ENCODE measurements at regions of chr1 and their contacts with region 1.

Region 1: GRCh38 chr1:74771913-74772515 is 39.1 kb downstream of the TYW3 start:
- DNase-seq: peak in 3 of 9 experiments; percentile 5 to 47 (median 39)
- ATAC-seq: peak; percentile 51
- H3K4me3 ChIP-seq: no peak overlapping the region
- H3K4me3 Mint-ChIP-seq: no peak overlapping the region
- H3K27ac ChIP-seq: no peak overlapping the region
- H3K27ac Mint-ChIP-seq: no peak overlapping the region
- H3K4me1 ChIP-seq: no peaks in the 10 kb centered on the region
- H3K4me1 Mint-ChIP-seq: peaks cover 3% of the 10 kb centered on the region
- H3K27me3 ChIP-seq: no peaks in the 10 kb centered on the region
- H3K27me3 Mint-ChIP-seq: peaks cover 8% of the 10 kb centered on the region
- CTCF ChIP-seq: peak; percentile 81

Region 2: DNA sequence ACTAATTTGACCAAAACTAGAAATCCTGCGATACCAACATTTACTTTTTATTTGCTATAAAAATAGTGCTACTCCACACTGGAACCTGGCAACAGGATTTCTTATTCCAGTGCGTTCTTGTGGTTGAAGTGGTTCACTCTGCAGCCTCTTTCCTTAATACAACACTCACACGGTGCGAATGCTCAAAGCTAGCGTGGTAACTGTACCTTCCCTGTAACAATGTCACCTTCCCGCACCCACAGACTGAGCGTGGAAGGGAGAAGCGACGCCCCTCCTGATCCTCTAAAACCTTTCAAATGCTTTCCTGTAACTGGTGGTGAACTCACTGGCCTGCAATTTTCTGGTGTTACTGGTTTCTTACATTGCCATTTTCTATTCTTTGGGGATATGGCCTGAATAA is 391.8 kb before region 1 on chr1:
- CTCF ChIA-PET with region 1: no interaction called
- POLR2A ChIA-PET with region 1: no interaction called
- intact Hi-C with region 1: no loop called
- DNase-seq: no peak
- ATAC-seq: no peak
- H3K4me3 ChIP-seq: no peak overlapping the region
- H3K4me3 Mint-ChIP-seq: no peak overlapping the region
- H3K27ac ChIP-seq: no peak overlapping the region
- H3K27ac Mint-ChIP-seq: no peak overlapping the region
- H3K4me1 ChIP-seq: no peaks in the 10 kb centered on the region
- H3K4me1 Mint-ChIP-seq: no peaks in the 10 kb centered on the region
- H3K27me3 ChIP-seq: no peaks in the 10 kb centered on the region
- H3K27me3 Mint-ChIP-seq: no peaks in the 10 kb centered on the region
- CTCF ChIP-seq: no peak

Region 3: DNA sequence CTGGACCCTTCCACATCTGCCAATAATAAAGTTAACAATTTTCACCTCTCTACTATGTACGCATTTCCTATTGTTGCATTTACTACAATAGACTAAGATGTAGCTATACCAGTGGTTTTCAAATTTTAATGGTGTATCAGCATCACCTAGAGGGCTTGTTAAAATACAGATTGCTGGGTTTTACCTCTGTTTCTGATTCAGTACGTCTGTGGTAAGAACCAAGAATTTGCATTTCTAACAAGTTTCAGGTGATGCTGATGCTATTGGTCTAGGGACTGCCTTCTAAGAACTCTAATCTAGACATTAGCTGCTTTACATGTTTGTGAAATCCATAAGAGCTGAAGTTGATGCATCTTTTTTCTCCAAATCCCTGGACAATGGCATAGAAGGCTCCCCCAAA is 158.1 kb before region 1 on chr1:
- CTCF ChIA-PET with region 1: no interaction called
- POLR2A ChIA-PET with region 1: no interaction called
- intact Hi-C with region 1: no loop called
- DNase-seq: no peak
- ATAC-seq: no peak
- H3K4me3 ChIP-seq: no peak overlapping the region
- H3K4me3 Mint-ChIP-seq: no peak overlapping the region
- H3K27ac ChIP-seq: no peak overlapping the region
- H3K27ac Mint-ChIP-seq: no peak overlapping the region
- H3K4me1 ChIP-seq: no peaks in the 10 kb centered on the region
- H3K4me1 Mint-ChIP-seq: no peaks in the 10 kb centered on the region
- H3K27me3 ChIP-seq: no peaks in the 10 kb centered on the region
- H3K27me3 Mint-ChIP-seq: no peaks in the 10 kb centered on the region
- CTCF ChIP-seq: no peak

Region 4: GRCh38 chr1:75203415-75204277 is 431.6 kb after region 1 on chr1:
- CTCF ChIA-PET with region 1: no interaction called
- POLR2A ChIA-PET with region 1: no interaction called
- intact Hi-C with region 1: loop called (anchors 10 kb)
- DNase-seq: peak in 1 of 9 experiments; percentile 1
- ATAC-seq: no peak
- H3K4me3 ChIP-seq: no peak overlapping the region
- H3K4me3 Mint-ChIP-seq: no peak overlapping the region
- H3K27ac ChIP-seq: no peak overlapping the region
- H3K27ac Mint-ChIP-seq: no peak overlapping the region
- H3K4me1 ChIP-seq: no peaks in the 10 kb centered on the region
- H3K4me1 Mint-ChIP-seq: no peaks in the 10 kb centered on the region
- H3K27me3 ChIP-seq: no peaks in the 10 kb centered on the region
- H3K27me3 Mint-ChIP-seq: no peaks in the 10 kb centered on the region
- CTCF ChIP-seq: no peak

Region 5: GRCh38 chr1:75625795-75626194 is 853.8 kb after region 1 on chr1:
- CTCF ChIA-PET with region 1: no interaction called
- POLR2A ChIA-PET with region 1: no interaction called
- intact Hi-C with region 1: loop called (anchors 5 kb)
- DNase-seq: no peak
- ATAC-seq: no peak
- H3K4me3 ChIP-seq: no peak overlapping the region
- H3K4me3 Mint-ChIP-seq: no peak overlapping the region
- H3K27ac ChIP-seq: no peak overlapping the region
- H3K27ac Mint-ChIP-seq: no peak overlapping the region
- H3K4me1 ChIP-seq: no peaks in the 10 kb centered on the region
- H3K4me1 Mint-ChIP-seq: no peaks in the 10 kb centered on the region
- H3K27me3 ChIP-seq: no peaks in the 10 kb centered on the region
- H3K27me3 Mint-ChIP-seq: peaks cover 26% of the 10 kb centered on the region
- CTCF ChIP-seq: no peak

Region 6: DNA sequence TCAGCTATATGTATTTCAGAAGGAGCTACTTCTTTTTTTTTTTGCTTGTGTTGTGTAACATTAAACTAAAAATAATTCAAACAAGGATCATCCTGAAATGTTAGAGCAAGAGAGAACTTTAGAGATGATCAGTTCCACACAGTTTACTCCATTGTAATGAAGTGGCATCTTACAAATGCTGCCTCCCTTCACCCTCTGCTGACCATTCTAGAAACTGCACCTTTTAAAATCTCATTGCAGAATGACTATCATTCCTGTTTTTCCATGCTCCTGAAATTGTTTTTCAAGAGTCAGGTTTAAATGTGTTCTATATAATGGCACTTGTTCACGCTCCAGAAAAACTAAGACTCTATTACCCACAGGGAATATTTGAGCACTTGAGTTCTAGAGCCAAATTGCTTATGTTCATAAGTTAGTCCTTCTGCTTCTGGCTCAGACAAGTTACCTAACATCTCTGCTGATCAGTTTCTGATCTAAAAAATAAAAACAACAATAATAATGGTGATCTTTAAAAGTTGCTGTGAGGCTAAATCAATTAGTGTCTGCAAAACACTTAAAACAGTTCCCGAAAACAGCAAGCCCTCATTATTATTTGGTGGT is 860.4 kb after region 1 on chr1:
- CTCF ChIA-PET with region 1: no interaction called
- POLR2A ChIA-PET with region 1: no interaction called
- intact Hi-C with region 1: loop called (anchors 5 kb)
- DNase-seq: peak in 1 of 9 experiments; percentile 23
- ATAC-seq: no peak
- H3K4me3 ChIP-seq: no peak overlapping the region
- H3K4me3 Mint-ChIP-seq: no peak overlapping the region
- H3K27ac ChIP-seq: no peak overlapping the region
- H3K27ac Mint-ChIP-seq: no peak overlapping the region
- H3K4me1 ChIP-seq: no peaks in the 10 kb centered on the region
- H3K4me1 Mint-ChIP-seq: no peaks in the 10 kb centered on the region
- H3K27me3 ChIP-seq: no peaks in the 10 kb centered on the region
- H3K27me3 Mint-ChIP-seq: peaks cover 18% of the 10 kb centered on the region
- CTCF ChIP-seq: peak; percentile 57

Measured in CD8-positive, alpha-beta T cell (primary cell).